ENCODE measurements at regions of chr19 and their contacts with region 1.

Region 1: DNA sequence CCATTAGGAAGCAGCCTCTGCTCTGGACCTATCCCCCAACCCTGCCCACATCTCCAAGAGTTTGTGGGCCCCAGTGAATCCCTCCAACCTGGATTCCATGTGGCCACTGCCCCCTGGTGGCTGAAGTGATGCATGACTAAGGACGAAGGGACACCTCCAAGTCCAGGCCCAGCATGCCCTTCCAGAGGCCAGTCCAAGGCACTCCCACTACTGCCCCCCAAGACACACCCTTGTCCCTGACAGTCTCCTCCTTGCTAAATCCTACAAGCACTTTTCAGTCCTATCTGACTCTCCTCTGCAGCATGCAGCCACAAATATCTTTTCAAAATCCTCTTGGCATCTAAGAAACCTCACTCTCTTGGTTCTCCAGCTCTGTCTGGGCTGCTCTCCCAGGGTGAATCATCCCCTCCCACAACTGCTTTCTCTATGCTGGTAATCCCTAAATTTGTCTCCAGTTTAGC is 33.0 kb downstream of the DEDD2 start:
- DNase-seq: peak in 1 of 2 donors; percentile 87
- H3K4me3 ChIP-seq: no peak overlapping the region
- H3K27ac ChIP-seq: no peak overlapping the region
- H3K4me1 ChIP-seq: no peaks in the 10 kb centered on the region
- H3K27me3 ChIP-seq: peaks cover 8% of the 10 kb centered on the region
- CTCF ChIP-seq: peak; percentile 68 to 82 (median 76)

Region 2: DNA sequence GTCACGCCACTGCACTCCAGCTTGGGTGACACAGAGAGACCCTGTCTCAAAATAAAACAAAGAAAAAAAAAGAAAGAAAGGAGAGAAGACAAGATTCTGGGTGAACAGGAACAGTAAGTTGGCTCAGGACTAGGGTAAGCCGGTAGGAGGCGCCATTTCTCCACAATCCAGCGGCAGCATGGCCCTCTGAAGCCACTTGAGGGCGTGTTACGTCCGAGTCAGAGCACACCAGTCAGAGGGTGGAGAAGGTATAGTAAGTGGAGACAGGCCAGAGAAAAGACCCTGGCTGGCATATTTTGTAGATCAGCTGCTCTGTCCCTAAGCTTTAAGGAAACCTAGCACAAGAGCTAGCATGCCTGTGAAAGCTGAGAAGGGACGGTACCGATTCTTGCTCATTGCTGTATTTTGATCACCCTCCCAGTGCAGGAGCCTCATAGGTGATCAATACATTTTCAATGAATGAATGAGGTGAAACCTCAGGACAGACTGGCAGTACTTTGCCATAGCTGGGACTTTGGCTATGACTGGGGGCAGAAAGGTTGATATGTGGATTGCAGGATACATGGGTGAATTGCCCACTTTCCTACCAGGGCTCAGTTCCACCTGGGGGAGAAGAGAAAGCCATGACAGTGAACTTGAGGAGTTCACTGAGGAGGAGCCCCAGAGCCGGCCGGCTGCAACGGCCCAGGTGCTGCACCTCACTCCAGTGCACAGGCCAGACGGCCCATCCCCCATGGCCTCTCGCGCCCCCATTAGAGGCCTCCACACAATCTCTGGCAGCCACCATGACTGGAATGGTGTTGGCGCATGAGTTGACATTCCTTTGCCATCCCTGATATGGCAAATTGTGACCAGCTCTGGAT is 75.7 kb before region 1 on chr19:
- intact Hi-C with region 1: loop called (anchors 1 kb)
- DNase-seq: peak; percentile 19 to 87
- H3K4me3 ChIP-seq: no peak overlapping the region
- H3K27ac ChIP-seq: no peak overlapping the region
- H3K4me1 ChIP-seq: no peaks in the 10 kb centered on the region
- H3K27me3 ChIP-seq: no peaks in the 10 kb centered on the region
- CTCF ChIP-seq: peak; percentile 75 to 93 (median 87)

Measured in ascending aorta (tissue), 2 donors.